ENCODE measurements at regions of chrX and their contacts with region 1.

Region 1: GRCh38 chrX:38768079-38768478 is 33.2 kb upstream of the MID1IP1 start:
- DNase-seq: no peak
- ATAC-seq: peak in 1 of 2 donors; percentile 60
- H3K4me3 ChIP-seq: no peak overlapping the region
- H3K27ac ChIP-seq: no peak overlapping the region
- H3K4me1 ChIP-seq: no peaks in the 10 kb centered on the region
- H3K27me3 ChIP-seq: no peaks in the 10 kb centered on the region
- CTCF ChIP-seq: peak in 2 of 5 experiments; percentile 23 to 38
- POLR2A ChIP-seq: no peak

Region 2: DNA sequence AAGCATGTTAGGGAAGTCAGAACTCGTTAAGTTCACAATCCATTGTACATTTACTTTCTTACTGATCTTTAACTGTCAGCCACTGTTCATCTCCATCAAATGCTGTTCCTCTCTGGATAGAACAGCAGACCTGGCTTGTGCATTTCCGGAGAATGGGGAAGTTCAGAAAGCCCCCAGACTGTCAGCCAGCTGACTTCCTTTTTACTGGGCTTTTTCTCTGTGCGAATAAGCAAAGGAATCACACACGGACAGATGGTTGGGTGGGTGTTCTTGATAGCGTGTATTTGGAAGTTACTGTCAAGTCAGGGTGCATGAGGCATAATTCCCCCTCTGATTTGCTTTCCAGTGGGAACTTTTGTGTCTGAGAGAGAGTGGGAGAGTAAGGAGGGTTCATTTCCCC is 149.9 kb before region 1 on chrX:
- in situ Hi-C with region 1: no loop called
- intact Hi-C with region 1: no loop called
- DNase-seq: no peak
- ATAC-seq: no peak
- H3K4me3 ChIP-seq: no peak overlapping the region
- H3K27ac ChIP-seq: peak overlapping the region in 2 of 4 donors; percentile 31 to 90
- H3K4me1 ChIP-seq: peaks cover 11 to 32% of the 10 kb centered on the region in 2 donors
- H3K27me3 ChIP-seq: no peaks in the 10 kb centered on the region
- CTCF ChIP-seq: no peak
- POLR2A ChIP-seq: no peak

Region 3: DNA sequence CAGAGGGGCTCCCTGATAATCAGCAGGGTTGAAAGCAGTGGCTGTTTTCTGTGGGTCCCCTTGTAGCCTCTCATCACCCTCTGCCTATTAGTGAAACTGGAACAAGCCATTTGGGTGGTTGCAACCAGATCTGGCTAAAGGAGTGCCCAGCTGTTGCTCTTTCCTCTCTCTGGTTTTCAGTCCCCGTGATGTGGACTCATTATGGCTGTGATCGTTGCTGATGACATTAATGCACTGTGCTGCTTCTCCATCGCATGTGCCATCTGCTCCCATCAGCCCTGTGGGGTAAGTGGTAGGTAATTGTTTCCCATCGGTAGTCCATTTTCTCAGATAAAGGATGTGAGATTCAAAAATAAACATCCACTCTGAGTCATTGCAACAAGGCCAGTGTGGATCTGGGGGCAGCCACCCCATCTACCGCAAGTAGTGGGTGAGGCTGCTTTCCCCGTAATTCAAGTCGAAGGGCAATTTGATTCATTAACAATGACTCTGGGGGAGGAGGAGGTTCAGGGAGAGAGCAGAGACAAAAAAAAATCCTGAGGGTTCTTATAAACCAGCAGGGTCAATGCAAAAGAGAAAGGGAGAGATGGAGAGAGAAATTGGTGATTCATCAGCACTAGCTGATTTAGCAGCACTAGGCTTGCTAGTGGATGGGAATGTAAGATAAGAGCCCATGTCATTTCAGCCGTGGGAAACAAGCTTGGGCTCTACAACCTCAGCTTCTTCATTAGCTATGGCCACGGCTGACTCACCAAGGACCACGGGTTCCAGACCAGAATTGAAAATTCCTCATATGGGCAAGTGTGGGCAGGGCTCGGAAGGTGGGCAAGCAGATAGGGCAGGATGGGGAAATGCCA is 390.9 kb after region 1 on chrX:
- in situ Hi-C with region 1: loop called in 1 of 4 experiments (anchors 5 kb)
- intact Hi-C with region 1: no loop called
- DNase-seq: no peak
- ATAC-seq: no peak
- H3K4me3 ChIP-seq: no peak overlapping the region
- H3K27ac ChIP-seq: no peak overlapping the region
- H3K4me1 ChIP-seq: no peaks in the 10 kb centered on the region
- H3K27me3 ChIP-seq: peaks cover 0 to 6% (median 0%) of the 10 kb centered on the region in 3 donors
- CTCF ChIP-seq: no peak
- POLR2A ChIP-seq: no peak